Activated CD8-positive, alpha-beta memory T cell treated with anti-CD3 and anti-CD28 coated beads, Interleukin-2, amount 10 ng/mL, durations not matched to agents 7 days and 5 days (primary cell): ENCODE measurements at regions of chr17 and their contacts with region 1.

Region 1: DNA sequence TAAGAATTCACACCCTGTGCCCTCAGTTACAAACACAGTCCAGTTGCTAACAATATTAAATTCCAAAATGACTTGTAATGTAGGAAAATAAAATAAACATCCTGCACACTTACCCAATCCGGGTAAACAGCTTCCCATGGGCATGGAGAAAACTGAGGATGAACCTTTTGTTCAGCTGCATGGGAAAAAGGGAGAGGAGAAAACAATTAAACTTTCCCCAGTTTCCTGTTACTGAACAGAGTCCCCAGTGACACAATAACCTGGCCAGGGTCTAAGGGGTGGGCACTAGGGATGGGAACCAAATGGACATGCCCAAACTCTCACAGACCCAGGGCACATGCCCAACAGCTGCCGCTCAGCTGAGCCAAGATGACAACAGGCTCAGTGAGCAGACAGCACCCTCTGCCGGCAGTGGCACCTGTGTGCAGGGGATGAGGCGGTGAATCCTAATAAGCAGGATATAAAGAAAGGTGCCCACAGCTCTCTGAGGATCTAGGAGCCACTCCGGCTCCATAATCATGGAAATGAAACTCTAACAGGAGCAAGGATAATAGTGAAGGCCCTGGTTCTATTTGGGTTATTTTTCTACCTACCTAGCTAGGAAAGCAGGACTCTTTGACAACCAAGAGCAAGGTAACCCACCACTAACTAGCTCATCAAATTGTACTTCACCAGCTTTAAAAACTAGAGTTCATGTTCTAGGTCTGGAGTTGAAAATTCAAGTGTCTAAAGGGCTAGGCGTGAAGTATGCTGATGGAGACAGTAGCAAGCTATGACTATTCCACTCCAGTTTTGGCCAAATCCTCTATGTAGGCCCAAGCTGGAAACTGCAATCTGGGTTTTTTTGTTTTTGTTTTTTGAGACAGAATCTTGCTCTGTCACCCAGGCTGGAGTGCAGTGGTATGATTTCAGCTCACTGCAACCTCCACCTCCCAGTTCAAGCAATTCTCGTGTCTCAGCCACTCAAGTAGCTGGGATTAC is 58.8 kb downstream of the SMG6 start:
- DNase-seq: peak; percentile 91
- ATAC-seq: peak; percentile 82
- H3K4me3 Mint-ChIP-seq: no peak overlapping the region
- H3K27ac Mint-ChIP-seq: peak overlapping the region; percentile 82
- H3K4me1 Mint-ChIP-seq: peaks cover 82% of the 10 kb centered on the region
- H3K27me3 Mint-ChIP-seq: no peaks in the 10 kb centered on the region

Region 2: DNA sequence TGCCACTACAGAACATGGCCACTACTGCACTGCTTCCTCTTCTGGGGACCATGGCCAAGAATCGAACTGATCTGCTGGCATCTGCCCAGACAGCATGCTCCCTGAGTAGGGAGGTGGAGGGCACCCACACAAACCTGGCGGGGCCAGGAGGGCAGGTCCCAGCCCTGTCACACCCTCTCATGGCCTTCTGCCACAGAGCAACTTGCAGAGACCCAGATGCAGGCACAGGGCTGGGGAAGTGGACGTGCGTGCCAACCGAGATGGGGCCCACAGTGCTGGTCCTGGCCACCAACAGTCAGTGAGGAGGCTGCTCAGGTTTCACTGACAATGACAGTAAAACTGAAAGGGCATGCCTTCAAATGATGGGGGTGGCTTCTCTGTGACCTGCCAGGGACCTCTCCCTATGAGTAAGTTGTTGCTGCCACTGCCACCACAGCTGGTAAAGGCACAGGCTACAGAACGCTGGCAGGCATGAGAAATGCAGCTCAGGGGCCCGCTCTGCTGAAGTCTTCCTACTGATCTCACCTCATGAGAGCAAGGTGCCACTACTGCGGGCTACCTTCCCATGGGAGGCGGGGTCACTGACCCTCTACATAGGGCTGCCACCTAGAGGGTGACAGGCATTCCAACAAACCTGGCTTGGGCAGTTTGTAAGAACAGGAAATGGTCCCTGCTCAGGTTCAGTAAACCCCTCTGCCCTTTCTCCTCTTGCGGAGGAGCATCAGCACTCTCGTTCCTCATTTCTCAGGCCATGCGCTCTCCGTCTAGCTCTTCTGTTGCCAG is 174.4 kb before region 1 on chr17:
- CTCF ChIA-PET with region 1: interaction called, 401 read pairs
- DNase-seq: peak; percentile 96
- ATAC-seq: peak; percentile 82
- H3K4me3 Mint-ChIP-seq: peak overlapping the region; percentile 77
- H3K27ac Mint-ChIP-seq: peak overlapping the region; percentile 97
- H3K4me1 Mint-ChIP-seq: peaks cover 89% of the 10 kb centered on the region
- H3K27me3 Mint-ChIP-seq: no peaks in the 10 kb centered on the region

Region 3: DNA sequence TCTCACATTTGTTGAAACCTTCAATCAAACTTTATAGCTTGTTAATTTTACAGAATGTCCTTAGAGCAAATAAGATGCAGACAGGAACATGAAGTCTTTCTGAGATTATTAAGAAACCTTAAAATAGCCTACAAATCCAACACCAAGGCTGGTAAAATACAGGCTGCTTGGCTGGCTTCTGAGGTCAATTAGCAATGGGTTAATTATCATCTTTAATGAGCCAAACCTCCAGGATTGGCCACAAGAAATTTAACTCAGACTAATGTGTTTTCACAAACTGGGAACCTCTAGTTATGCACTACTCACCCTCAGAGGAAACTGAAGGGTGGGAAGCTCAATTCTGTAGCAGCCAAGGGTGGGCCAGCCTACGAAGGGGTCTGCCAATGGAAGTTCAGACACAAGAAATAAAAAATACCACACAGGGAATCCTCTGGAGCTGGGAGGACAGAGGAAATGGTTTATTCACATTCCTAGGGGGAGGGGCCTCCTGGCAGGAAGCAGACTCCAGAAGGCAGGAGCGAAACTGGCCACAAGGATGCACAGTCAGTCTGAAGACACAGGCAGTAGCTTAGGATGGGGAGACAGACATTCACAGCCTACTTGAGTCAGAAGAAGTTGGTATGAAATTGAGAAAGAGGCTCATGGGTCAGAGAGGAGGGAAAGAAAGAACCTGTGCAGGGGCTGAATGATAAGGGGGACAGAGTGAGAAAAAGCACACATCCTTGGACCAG is 153.9 kb before region 1 on chr17:
- CTCF ChIA-PET with region 1: interaction called, 36 read pairs
- DNase-seq: no peak
- ATAC-seq: no peak
- H3K4me3 Mint-ChIP-seq: peak overlapping the region; percentile 91
- H3K27ac Mint-ChIP-seq: peak overlapping the region; percentile 99
- H3K4me1 Mint-ChIP-seq: peaks cover 67% of the 10 kb centered on the region
- H3K27me3 Mint-ChIP-seq: no peaks in the 10 kb centered on the region

Region 4: DNA sequence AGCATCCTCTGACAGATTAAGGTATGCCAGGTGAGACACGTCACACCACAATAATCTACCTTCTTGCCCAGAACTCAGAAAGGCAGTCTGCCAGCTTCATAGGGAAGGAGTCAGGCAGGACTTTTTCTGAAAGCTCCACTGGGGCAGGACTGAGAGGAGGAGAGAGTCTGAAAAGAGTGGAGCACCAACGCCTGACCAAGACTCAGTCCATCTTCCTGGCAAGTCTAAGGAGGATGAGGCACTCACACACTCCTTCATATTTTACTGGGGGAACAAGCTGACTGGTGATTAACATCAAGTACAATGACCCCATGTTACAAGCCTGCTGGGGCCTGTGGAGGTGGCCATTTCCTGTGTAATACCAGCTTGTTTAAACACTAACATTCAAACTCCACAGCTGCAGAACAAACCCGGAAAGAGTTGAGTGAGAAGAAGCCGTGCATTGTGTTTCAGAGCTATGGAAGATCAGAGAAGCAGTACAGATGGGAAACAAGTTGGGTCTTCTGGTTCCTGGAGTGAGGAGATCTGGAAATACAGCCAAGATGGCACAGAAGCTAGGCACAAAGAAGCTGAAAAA is 67.5 kb before region 1 on chr17:
- CTCF ChIA-PET with region 1: interaction called, 11 read pairs
- DNase-seq: no peak
- ATAC-seq: no peak
- H3K4me3 Mint-ChIP-seq: no peak overlapping the region
- H3K27ac Mint-ChIP-seq: no peak overlapping the region
- H3K4me1 Mint-ChIP-seq: peaks cover 49% of the 10 kb centered on the region
- H3K27me3 Mint-ChIP-seq: no peaks in the 10 kb centered on the region

Region 5: DNA sequence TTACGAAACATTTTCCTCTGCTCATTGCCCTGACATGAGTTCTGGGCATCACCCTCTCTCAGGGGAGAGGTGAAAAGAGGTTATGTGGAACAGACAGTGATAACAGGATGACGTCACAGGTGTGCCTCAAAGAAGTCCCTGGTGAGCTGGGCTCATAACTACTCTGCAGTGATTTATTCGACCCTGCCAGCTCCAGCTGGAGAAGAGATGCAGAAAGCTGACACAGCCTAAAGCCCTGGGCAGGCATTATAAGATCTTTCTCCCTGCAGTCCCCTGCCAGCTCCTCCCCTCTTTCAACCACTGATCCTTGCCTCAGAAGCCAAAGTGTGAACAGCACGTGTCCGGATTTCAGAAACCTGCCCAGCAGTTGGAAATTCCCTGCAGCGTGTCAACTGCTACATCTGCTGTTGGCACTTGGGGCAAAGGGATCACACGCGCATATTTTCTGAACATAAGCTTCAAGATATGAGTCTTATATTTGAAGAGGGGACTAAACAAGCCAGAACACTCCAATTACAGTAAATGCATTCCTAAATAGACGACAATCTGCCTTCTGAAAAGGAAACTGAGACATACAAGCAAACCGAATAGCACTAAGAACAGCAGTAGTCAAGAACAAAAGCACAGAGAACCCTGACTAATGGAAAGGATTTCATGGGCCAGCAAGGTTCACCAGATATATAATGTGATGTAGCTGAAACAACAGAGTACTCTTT is 21.8 kb before region 1 on chr17:
- CTCF ChIA-PET with region 1: interaction called, 17 read pairs
- DNase-seq: peak; percentile 87
- ATAC-seq: peak; percentile 88
- H3K4me3 Mint-ChIP-seq: peak overlapping the region; percentile 40
- H3K27ac Mint-ChIP-seq: peak overlapping the region; percentile 77
- H3K4me1 Mint-ChIP-seq: peaks cover 47% of the 10 kb centered on the region
- H3K27me3 Mint-ChIP-seq: no peaks in the 10 kb centered on the region

Region 6: GRCh38 chr17:2266045-2266864 is 21.4 kb after region 1 on chr17:
- CTCF ChIA-PET with region 1: interaction called, 76 read pairs
- DNase-seq: peak; percentile 98
- ATAC-seq: peak; percentile 76
- H3K4me3 Mint-ChIP-seq: peak overlapping the region; percentile 79
- H3K27ac Mint-ChIP-seq: peak overlapping the region; percentile 100
- H3K4me1 Mint-ChIP-seq: peaks cover 85% of the 10 kb centered on the region
- H3K27me3 Mint-ChIP-seq: no peaks in the 10 kb centered on the region

Region 7: GRCh38 chr17:2336215-2336851 is 91.5 kb after region 1 on chr17 and contains the start of gene TSR1:
- CTCF ChIA-PET with region 1: interaction called, 10 read pairs
- DNase-seq: peak; percentile 94
- ATAC-seq: peak; percentile 91
- H3K4me3 Mint-ChIP-seq: peak within 1 kb of the TSS; percentile 100
- H3K27ac Mint-ChIP-seq: peak within 1 kb of the TSS; percentile 93
- H3K4me1 Mint-ChIP-seq: peaks cover 21% of the 10 kb centered on the region
- H3K27me3 Mint-ChIP-seq: no peaks in the 10 kb centered on the region
- total RNA-seq, gene TSR1: 33.2 to 45.7 TPM